ENCODE measurements at regions of chr6 and their contacts with region 1.

Region 1: DNA sequence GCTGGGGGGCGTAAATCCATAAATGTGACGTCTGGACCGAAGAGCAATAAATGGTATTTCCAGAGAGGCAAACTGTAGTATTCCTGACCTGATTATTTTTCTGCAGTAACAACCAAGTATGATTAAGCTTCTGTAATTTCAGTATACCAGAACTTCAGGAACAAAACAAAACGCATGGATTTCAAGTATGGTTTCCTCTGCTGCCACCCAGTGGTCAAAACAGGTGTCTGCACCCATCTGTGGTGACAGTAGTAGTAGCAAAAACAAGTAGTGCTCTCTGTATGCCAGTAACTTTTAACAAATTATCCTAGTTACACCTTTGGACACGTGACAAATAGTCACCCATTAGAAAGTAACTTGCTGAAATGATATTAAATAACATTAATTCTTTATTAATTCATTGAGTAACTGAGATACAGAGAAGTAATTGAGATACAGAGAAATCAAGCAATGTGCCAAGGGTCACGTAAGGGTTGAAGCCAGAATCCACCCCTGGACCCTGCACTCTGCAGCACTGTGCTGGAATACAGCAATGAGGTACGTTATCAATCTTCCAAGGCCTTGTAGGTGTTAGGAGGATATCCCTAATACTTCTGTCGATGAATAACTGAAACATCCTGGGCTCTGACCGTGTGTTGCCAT is 7.9 kb downstream of the CALHM4 start:
- DNase-seq: peak; percentile 70
- H3K4me3 ChIP-seq: no peak overlapping the region; a peak in 1 of 4 replicates
- H3K27ac ChIP-seq: no peak overlapping the region
- H3K4me1 ChIP-seq: peaks cover 2 to 23% of the 10 kb centered on the region in 2 experiments; a peak in 3 of 4 replicates
- H3K27me3 ChIP-seq: no peaks in the 10 kb centered on the region
- CTCF ChIP-seq: peak; percentile 94
- EP300 ChIP-seq: no peak
- RAD21 ChIP-seq: peak; percentile 93

Region 2: GRCh38 chr6:116550796-116551195 is 10.7 kb before region 1 on chr6:
- CTCF ChIA-PET with region 1: interaction called, 18 read pairs
- POLR2A ChIA-PET with region 1: no interaction called
- DNase-seq: no peak
- H3K4me3 ChIP-seq: no peak overlapping the region
- H3K27ac ChIP-seq: no peak overlapping the region
- H3K4me1 ChIP-seq: no peaks in the 10 kb centered on the region; a peak in 1 of 4 replicates
- H3K27me3 ChIP-seq: no peaks in the 10 kb centered on the region
- CTCF ChIP-seq: no peak
- EP300 ChIP-seq: no peak
- RAD21 ChIP-seq: no peak

Measured in SK-N-SH (cell line).